PC-9 (cell line): ENCODE measurements at regions of chr7 and their contacts with region 1.

Region 1: DNA sequence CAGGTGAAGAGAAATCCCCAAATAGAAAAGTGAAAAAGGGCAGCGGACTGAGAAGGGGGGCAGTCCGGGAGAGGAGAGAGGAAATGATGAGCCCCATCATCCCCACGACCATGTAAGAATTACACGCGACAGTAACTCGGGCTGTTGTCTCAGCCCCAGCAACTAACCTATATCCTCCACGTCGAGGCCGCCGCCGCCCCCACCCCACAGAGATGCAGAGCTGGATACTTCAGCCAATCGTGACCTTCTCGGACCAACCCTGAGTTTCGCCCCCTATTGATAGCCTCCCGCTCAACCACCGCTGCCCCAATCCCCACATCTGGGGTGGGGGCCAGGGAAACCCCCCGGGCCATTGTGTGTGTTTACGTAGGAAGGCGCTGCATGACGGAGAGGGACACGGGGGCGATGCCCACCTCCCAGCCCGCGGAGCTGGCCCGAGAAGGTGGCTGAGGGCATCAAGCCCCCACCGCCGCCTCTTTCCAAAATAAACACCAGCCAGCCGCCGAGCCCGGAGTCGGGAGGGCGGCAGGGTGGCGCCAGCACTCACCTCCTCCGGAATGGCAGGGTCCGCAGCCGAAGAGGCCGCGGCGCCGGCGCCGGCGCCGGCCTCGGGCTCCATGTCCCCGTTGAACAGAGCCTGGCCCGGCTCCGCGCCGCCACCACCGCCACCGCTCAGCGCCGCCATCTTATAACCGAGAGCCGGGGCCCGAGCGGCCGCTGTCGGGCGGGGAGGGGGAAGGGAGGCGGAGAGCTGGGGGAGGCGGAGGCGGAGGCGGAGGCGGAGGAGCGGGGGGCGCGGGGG is 509 bp downstream of the BRAF start:
- DNase-seq: peak; percentile 51 to 69
- H3K4me3 ChIP-seq: peak overlapping the region; percentile 98
- H3K27ac ChIP-seq: peak overlapping the region; percentile 85
- H3K4me1 ChIP-seq: peaks cover 50% of the 10 kb centered on the region
- H3K27me3 ChIP-seq: no peaks in the 10 kb centered on the region
- CTCF ChIP-seq: peak; percentile 66

Region 2: GRCh38 chr7:140661121-140661520 is 263.1 kb before region 1 on chr7:
- CTCF ChIA-PET with region 1: no interaction called
- POLR2A ChIA-PET with region 1: interaction called, 10 read pairs
- intact Hi-C with region 1: no loop called
- DNase-seq: no peak
- H3K4me3 ChIP-seq: no peak overlapping the region
- H3K27ac ChIP-seq: no peak overlapping the region
- H3K4me1 ChIP-seq: peaks cover 11% of the 10 kb centered on the region
- H3K27me3 ChIP-seq: no peaks in the 10 kb centered on the region
- CTCF ChIP-seq: no peak